Breast epithelium (tissue), 4 donors: ENCODE measurements at regions of chr4 and their contacts with region 1.

Region 1: GRCh38 chr4:126172126-126172525 is 857.4 kb downstream of the FAT4 start:
- DNase-seq: no peak
- H3K4me3 ChIP-seq: no peak overlapping the region
- H3K27ac ChIP-seq: no peak overlapping the region
- H3K4me1 ChIP-seq: no peaks in the 10 kb centered on the region
- H3K27me3 ChIP-seq: no peaks in the 10 kb centered on the region
- CTCF ChIP-seq: no peak
- POLR2A ChIP-seq: no peak

Region 2: GRCh38 chr4:125620066-125620860 is 551.9 kb before region 1 on chr4:
- intact Hi-C with region 1: no loop called
- DNase-seq: no peak
- H3K4me3 ChIP-seq: peak overlapping the region in 1 of 3 donors; percentile 8
- H3K27ac ChIP-seq: no peak overlapping the region
- H3K4me1 ChIP-seq: no peaks in the 10 kb centered on the region
- H3K27me3 ChIP-seq: no peaks in the 10 kb centered on the region
- CTCF ChIP-seq: no peak
- POLR2A ChIP-seq: no peak

Region 3: DNA sequence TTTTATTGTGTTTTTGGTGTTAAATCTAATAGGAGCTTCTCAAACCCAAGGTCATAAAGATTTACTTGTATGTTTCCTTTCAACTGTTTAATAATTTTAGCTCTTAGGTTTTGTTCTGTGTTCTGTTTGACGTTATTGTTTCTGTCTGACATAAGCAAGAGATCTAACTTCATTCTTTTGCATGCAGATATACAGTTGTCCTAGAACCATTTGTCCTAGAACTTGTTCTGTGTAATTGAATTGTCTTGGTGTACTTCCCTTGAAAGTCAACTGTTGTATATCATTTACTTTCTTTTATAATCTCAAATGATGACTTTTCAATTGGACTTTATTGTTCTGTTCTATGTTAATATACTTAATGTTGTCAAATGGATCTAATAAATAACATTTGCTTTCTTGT is 119.8 kb after region 1 on chr4:
- intact Hi-C with region 1: loop called (anchors 5 kb)
- DNase-seq: no peak
- H3K4me3 ChIP-seq: no peak overlapping the region
- H3K27ac ChIP-seq: no peak overlapping the region
- H3K4me1 ChIP-seq: no peaks in the 10 kb centered on the region
- H3K27me3 ChIP-seq: no peaks in the 10 kb centered on the region
- CTCF ChIP-seq: no peak
- POLR2A ChIP-seq: no peak

Region 4: GRCh38 chr4:126354784-126355183 is 182.7 kb after region 1 on chr4:
- intact Hi-C with region 1: no loop called
- DNase-seq: no peak
- H3K4me3 ChIP-seq: no peak overlapping the region
- H3K27ac ChIP-seq: no peak overlapping the region
- H3K4me1 ChIP-seq: no peaks in the 10 kb centered on the region
- H3K27me3 ChIP-seq: no peaks in the 10 kb centered on the region
- CTCF ChIP-seq: no peak
- POLR2A ChIP-seq: no peak